ENCODE measurements at regions of chr17 and their contacts with region 1.

Region 1: DNA sequence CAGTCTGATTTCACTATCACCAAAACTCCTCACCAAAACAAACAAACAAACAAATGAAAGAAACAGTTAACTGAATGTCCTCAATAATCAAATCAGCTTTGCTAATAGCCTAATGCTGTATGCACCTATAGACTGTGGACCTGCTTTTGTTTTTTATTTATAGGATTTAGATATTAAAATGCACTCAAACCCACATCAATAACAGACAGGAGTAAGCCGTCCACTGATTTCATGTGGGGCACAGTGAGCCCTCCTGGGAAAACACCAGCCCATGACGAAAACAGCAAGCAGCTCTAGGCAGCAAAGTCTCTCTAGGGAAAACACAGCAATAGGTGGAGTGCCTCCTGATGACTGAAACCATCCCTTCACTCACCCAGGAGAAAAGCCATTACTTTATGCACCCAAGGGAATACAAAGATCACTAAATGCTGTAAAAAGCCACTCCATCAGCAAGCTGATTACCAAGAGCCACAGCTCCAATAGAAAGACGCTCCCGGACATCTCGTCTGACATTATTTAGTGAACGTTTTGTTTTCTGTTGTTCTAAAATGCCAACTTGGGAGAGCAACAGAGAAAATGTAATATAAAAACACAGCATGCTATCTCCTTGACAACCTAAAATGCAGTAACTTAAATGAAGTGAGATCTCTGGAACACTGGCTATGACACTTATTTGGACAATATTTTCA is 47.8 kb downstream of the ANKFY1 start:
- DNase-seq: no peak
- ATAC-seq: no peak
- H3K4me3 ChIP-seq: no peak overlapping the region
- H3K27ac ChIP-seq: no peak overlapping the region
- H3K4me1 ChIP-seq: peaks cover 2% of the 10 kb centered on the region; the same call in 1 of the 2 replicates
- H3K27me3 ChIP-seq: no peaks in the 10 kb centered on the region
- CTCF ChIP-seq: no peak
- POLR2A ChIP-seq: no peak
- RAD21 ChIP-seq: no peak

Region 2: GRCh38 chr17:4263282-4264215 is 47.5 kb after region 1 on chr17 and contains the start of gene ANKFY1:
- CTCF ChIA-PET with region 1: interaction called, 3 read pairs
- POLR2A ChIA-PET with region 1: no interaction called
- dilution Hi-C with region 1: no loop called
- in situ Hi-C with region 1: no loop called
- intact Hi-C with region 1: loop called (anchors 5 kb)
- DNase-seq: peak; percentile 92
- ATAC-seq: peak; percentile 99
- H3K4me3 ChIP-seq: peak within 1 kb of the TSS; percentile 75
- H3K27ac ChIP-seq: peak within 1 kb of the TSS; percentile 81
- H3K4me1 ChIP-seq: peaks cover 4% of the 10 kb centered on the region
- H3K27me3 ChIP-seq: no peaks in the 10 kb centered on the region
- CTCF ChIP-seq: peak; percentile 31; the same call in 1 of the 2 replicates
- POLR2A ChIP-seq: peak; percentile 27; the same call in 1 of the 2 replicates
- RAD21 ChIP-seq: no peak
- total RNA-seq, gene ANKFY1: 43.9 and 48.9 TPM in 2 replicates

Region 3: GRCh38 chr17:4304417-4305027 is 88.5 kb after region 1 on chr17:
- CTCF ChIA-PET with region 1: no interaction called
- POLR2A ChIA-PET with region 1: no interaction called
- dilution Hi-C with region 1: no loop called
- in situ Hi-C with region 1: no loop called
- intact Hi-C with region 1: loop called (anchors 1 kb)
- DNase-seq: peak; percentile 31
- ATAC-seq: peak; percentile 62
- H3K4me3 ChIP-seq: no peak overlapping the region
- H3K27ac ChIP-seq: no peak overlapping the region
- H3K4me1 ChIP-seq: peaks cover 3% of the 10 kb centered on the region; the same call in 1 of the 2 replicates
- H3K27me3 ChIP-seq: no peaks in the 10 kb centered on the region
- CTCF ChIP-seq: peak; percentile 61
- POLR2A ChIP-seq: no peak
- RAD21 ChIP-seq: peak; percentile 50

Region 4: GRCh38 chr17:4366327-4367063 is 150.5 kb after region 1 on chr17 and contains the start of gene UBE2G1:
- CTCF ChIA-PET with region 1: interaction called, 3 read pairs
- POLR2A ChIA-PET with region 1: no interaction called
- dilution Hi-C with region 1: no loop called
- in situ Hi-C with region 1: no loop called
- intact Hi-C with region 1: loop called (anchors 1 kb)
- DNase-seq: peak; percentile 95
- ATAC-seq: peak; percentile 92
- H3K4me3 ChIP-seq: peak within 1 kb of the TSS; percentile 71
- H3K27ac ChIP-seq: peak within 1 kb of the TSS; percentile 65
- H3K4me1 ChIP-seq: peaks cover 3% of the 10 kb centered on the region; the same call in 1 of the 2 replicates
- H3K27me3 ChIP-seq: no peaks in the 10 kb centered on the region
- CTCF ChIP-seq: 0 out of 2 replicates have a peak, but pooled peaks have one; percentile 12
- POLR2A ChIP-seq: peak; percentile 82
- RAD21 ChIP-seq: peak; percentile 28; the same call in 1 of the 2 replicates
- total RNA-seq, gene UBE2G1: 26.3 and 37.5 TPM in 2 replicates

Region 5: GRCh38 chr17:4412933-4413831 is 197.2 kb after region 1 on chr17:
- CTCF ChIA-PET with region 1: interaction called, 25 read pairs
- POLR2A ChIA-PET with region 1: no interaction called
- dilution Hi-C with region 1: no loop called
- in situ Hi-C with region 1: no loop called
- intact Hi-C with region 1: loop called (anchors 1 kb)
- DNase-seq: peak; percentile 84
- ATAC-seq: peak; percentile 98
- H3K4me3 ChIP-seq: no peak overlapping the region
- H3K27ac ChIP-seq: no peak overlapping the region
- H3K4me1 ChIP-seq: no peaks in the 10 kb centered on the region
- H3K27me3 ChIP-seq: 0 out of 2 replicates have a peak, but pooled peaks cover 3% of the 10 kb centered on the region
- CTCF ChIP-seq: peak; percentile 98
- POLR2A ChIP-seq: peak; percentile 54
- RAD21 ChIP-seq: peak; percentile 99